Activated CD4-positive, alpha-beta T cell treated with anti-CD3 and anti-CD28 coated beads, Interleukin-2, amount 10 ng/mL, durations not matched to agents 24 days and 14 days (primary cell): ENCODE measurements at regions of chr5 and their contacts with region 1.

Region 1: DNA sequence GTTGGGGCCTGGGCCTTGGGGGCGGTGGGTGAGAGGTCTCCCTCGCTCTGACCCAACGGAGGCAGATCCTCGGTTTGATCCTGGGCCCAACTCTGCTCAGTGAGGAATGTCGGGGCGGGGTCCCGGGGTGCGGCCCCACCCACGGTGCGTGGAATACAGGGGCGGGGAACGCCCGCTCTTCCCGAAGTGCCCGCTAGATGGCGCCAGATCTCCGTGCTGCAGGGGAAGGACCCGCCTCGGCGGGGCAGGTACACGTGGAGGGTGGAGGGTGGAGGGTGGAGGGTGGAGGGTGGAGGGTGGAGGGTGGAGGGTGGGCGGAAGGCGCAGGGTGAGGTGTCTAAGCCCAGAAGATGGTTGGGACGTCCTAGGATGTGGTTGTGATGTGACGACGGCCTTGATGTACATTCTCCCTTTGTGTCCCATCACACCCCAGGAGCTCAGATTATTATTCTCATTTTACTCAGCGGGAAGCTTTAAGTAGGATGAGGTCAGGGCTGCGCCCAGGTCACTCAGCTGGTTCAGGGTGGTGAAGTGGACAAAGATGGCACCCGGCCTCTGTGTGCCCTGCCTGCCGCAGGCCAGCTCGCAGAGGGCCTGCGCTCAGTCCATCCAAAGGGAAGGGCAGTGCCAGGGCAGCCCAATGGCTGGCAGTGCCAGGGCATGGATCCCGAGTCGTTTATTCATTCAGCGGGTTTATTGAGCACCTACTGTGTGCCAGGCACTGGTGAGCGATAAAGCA is 9.4 kb upstream of the RPS14 start:
- DNase-seq: peak; percentile 96
- H3K4me3 Mint-ChIP-seq: peak overlapping the region; percentile 44
- H3K27ac Mint-ChIP-seq: peak overlapping the region; percentile 10
- H3K4me1 Mint-ChIP-seq: peaks cover 27% of the 10 kb centered on the region
- H3K27me3 Mint-ChIP-seq: no peaks in the 10 kb centered on the region

Region 2: DNA sequence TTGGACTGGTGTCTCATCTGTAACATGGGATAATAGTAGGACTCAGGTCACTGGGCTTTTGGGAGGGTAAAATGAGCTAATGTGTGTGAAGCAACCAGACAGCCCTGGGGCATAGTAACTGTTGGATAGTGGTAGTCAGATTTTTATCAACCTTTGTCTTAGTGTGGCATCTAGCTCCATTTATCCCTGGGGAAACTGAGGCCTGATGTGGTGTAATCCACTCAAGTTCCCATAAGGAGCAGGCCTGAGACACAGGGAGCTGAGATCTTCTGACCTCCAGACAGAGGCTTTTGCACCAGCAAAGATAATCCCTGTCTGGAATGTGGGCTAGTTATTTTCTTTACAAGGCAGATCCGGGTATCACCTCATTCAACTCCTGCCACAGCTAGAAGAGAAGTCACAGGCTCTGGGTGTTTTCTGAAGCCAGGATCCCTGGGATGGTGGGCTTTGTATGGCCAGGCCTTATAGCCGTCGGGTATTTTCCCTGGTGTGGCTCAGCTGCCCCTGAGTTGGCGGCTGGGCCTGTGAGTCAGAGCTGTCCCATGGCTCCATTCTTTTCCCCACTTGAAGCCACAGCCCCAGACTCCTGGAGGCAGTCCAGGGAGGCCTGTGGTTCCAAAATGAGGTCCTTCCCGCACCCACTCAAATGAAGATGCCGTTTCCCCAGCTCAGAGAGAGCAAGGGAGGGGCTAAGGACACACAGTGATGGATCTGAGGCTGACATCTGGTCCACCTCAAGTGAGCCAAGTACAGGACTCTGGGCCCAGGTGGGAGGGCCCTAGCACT is 346.5 kb before region 1 on chr5:
- intact Hi-C with region 1: no loop called
- DNase-seq: no peak
- H3K4me3 Mint-ChIP-seq: no peak overlapping the region
- H3K27ac Mint-ChIP-seq: no peak overlapping the region
- H3K4me1 Mint-ChIP-seq: no peaks in the 10 kb centered on the region
- H3K27me3 Mint-ChIP-seq: peaks cover 10% of the 10 kb centered on the region

Region 3: GRCh38 chr5:150438873-150439546 is 20.0 kb before region 1 on chr5:
- intact Hi-C with region 1: no loop called
- DNase-seq: no peak
- H3K4me3 Mint-ChIP-seq: no peak overlapping the region
- H3K27ac Mint-ChIP-seq: no peak overlapping the region
- H3K4me1 Mint-ChIP-seq: peaks cover 8% of the 10 kb centered on the region
- H3K27me3 Mint-ChIP-seq: no peaks in the 10 kb centered on the region

Region 4: GRCh38 chr5:150481972-150482406 is 23.0 kb after region 1 on chr5:
- intact Hi-C with region 1: no loop called
- DNase-seq: no peak
- H3K4me3 Mint-ChIP-seq: no peak overlapping the region
- H3K27ac Mint-ChIP-seq: no peak overlapping the region
- H3K4me1 Mint-ChIP-seq: peaks cover under 1% of the 10 kb centered on the region
- H3K27me3 Mint-ChIP-seq: peaks cover 19% of the 10 kb centered on the region

Region 5: GRCh38 chr5:150497274-150497988 is 38.4 kb after region 1 on chr5:
- intact Hi-C with region 1: no loop called
- DNase-seq: no peak
- H3K4me3 Mint-ChIP-seq: no peak overlapping the region
- H3K27ac Mint-ChIP-seq: no peak overlapping the region
- H3K4me1 Mint-ChIP-seq: no peaks in the 10 kb centered on the region
- H3K27me3 Mint-ChIP-seq: peaks cover 3% of the 10 kb centered on the region

Region 6: GRCh38 chr5:150523472-150524350 is 64.7 kb after region 1 on chr5:
- intact Hi-C with region 1: loop called (anchors 1 kb)
- DNase-seq: peak; percentile 69
- H3K4me3 Mint-ChIP-seq: no peak overlapping the region
- H3K27ac Mint-ChIP-seq: no peak overlapping the region
- H3K4me1 Mint-ChIP-seq: no peaks in the 10 kb centered on the region
- H3K27me3 Mint-ChIP-seq: no peaks in the 10 kb centered on the region

Region 7: GRCh38 chr5:150544611-150545219 is 85.7 kb after region 1 on chr5:
- intact Hi-C with region 1: loop called (anchors 1 kb)
- DNase-seq: peak; percentile 88
- H3K4me3 Mint-ChIP-seq: no peak overlapping the region
- H3K27ac Mint-ChIP-seq: no peak overlapping the region
- H3K4me1 Mint-ChIP-seq: no peaks in the 10 kb centered on the region
- H3K27me3 Mint-ChIP-seq: no peaks in the 10 kb centered on the region

Region 8: DNA sequence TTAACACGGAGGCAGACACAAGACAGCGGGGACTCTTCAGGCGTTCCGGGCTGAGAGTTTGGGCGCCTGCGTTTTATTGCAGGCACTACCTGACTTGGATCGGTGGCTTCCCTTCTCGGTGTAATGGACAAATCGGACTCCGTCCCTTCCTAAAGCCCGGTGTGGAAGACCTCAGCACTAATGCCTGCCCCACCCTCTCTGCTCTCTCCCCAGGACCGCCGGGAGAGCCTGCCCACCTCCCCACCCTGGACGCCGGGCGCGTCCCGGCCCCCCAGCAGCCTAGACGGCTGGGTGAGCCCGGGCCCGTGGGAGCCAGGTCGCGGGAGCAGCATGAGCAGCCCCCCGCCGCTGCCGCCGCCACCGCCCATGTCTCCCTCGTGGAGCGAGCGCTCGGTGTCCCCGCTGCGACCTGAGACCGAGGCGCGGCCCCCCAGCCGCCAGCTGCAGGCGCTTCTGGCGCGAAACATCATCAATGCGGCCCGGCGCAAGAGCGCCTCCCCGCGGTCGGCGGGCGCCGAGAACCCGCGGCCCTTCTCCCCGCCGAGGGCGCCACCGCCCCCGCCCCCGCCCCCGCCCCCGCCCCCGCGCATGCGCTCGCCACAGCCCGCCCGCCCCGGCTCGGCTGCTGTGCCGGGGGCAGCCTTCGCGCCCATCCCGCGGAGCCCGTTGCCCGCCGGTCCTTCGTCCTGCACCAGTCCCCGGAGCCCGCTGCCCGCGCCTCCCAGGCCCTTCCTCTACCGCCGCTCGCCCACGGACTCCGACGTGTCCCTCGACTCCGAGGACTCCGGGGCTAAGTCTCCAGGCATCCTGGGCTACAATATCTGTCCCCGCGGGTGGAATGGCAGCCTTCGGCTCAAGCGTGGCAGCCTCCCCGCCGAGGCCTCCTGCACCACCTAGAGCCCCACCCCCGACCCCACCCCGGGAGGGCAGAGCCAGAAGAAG is 197.5 kb after region 1 on chr5:
- intact Hi-C with region 1: loop called (anchors 5 kb)
- DNase-seq: peak; percentile 95
- H3K4me3 Mint-ChIP-seq: peak overlapping the region; percentile 80
- H3K27ac Mint-ChIP-seq: peak overlapping the region; percentile 68
- H3K4me1 Mint-ChIP-seq: peaks cover 10% of the 10 kb centered on the region
- H3K27me3 Mint-ChIP-seq: peaks cover 24% of the 10 kb centered on the region